ENCODE measurements at regions of chr2 and their contacts with region 1.

Region 1: GRCh38 chr2:165874445-165875039 is 79.0 kb downstream of the TTC21B start:
- DNase-seq: peak; percentile 79
- ATAC-seq: peak; percentile 91
- H3K4me3 ChIP-seq: no peak overlapping the region
- H3K4me3 Mint-ChIP-seq: peak overlapping the region; percentile 7
- H3K27ac ChIP-seq: peak overlapping the region in 1 of 2 donors; percentile 28
- H3K27ac Mint-ChIP-seq: peak overlapping the region; percentile 34
- H3K4me1 ChIP-seq: peaks cover 0 to 4% of the 10 kb centered on the region in 2 donors
- H3K4me1 Mint-ChIP-seq: peaks cover 3% of the 10 kb centered on the region
- H3K27me3 ChIP-seq: no peaks in the 10 kb centered on the region
- H3K27me3 Mint-ChIP-seq: no peaks in the 10 kb centered on the region
- CTCF ChIP-seq: peak; percentile 90

Region 2: GRCh38 chr2:165239230-165239629 is 635.3 kb before region 1 on chr2 and contains the start of gene SCN2A:
- CTCF ChIA-PET with region 1: interaction called, 12 read pairs
- POLR2A ChIA-PET with region 1: no interaction called
- intact Hi-C with region 1: no loop called
- DNase-seq: peak; percentile 31
- ATAC-seq: no peak
- H3K4me3 ChIP-seq: no peak within 1 kb of the TSS
- H3K4me3 Mint-ChIP-seq: no peak within 1 kb of the TSS
- H3K27ac ChIP-seq: no peak within 1 kb of the TSS
- H3K27ac Mint-ChIP-seq: no peak within 1 kb of the TSS
- H3K4me1 ChIP-seq: no peaks in the 10 kb centered on the region
- H3K4me1 Mint-ChIP-seq: no peaks in the 10 kb centered on the region
- H3K27me3 ChIP-seq: no peaks in the 10 kb centered on the region
- H3K27me3 Mint-ChIP-seq: peaks cover 14% of the 10 kb centered on the region
- CTCF ChIP-seq: peak; percentile 70
- total RNA-seq, gene SCN2A: 0.22 and 0.44 TPM in 2 replicates

Region 3: GRCh38 chr2:165401285-165401852 is 473.2 kb before region 1 on chr2:
- CTCF ChIA-PET with region 1: interaction called, 133 read pairs
- POLR2A ChIA-PET with region 1: no interaction called
- intact Hi-C with region 1: loop called (anchors 1 kb)
- DNase-seq: peak; percentile 75
- ATAC-seq: no peak
- H3K4me3 ChIP-seq: no peak overlapping the region
- H3K4me3 Mint-ChIP-seq: no peak overlapping the region
- H3K27ac ChIP-seq: no peak overlapping the region
- H3K27ac Mint-ChIP-seq: no peak overlapping the region
- H3K4me1 ChIP-seq: no peaks in the 10 kb centered on the region
- H3K4me1 Mint-ChIP-seq: no peaks in the 10 kb centered on the region
- H3K27me3 ChIP-seq: no peaks in the 10 kb centered on the region
- H3K27me3 Mint-ChIP-seq: peaks cover 3% of the 10 kb centered on the region
- CTCF ChIP-seq: peak; percentile 83

Region 4: GRCh38 chr2:165698444-165698894 is 176.1 kb before region 1 on chr2:
- CTCF ChIA-PET with region 1: interaction called, 9 read pairs
- POLR2A ChIA-PET with region 1: no interaction called
- intact Hi-C with region 1: loop called (anchors 2 kb)
- DNase-seq: peak; percentile 57
- ATAC-seq: peak; percentile 57
- H3K4me3 ChIP-seq: no peak overlapping the region
- H3K4me3 Mint-ChIP-seq: no peak overlapping the region
- H3K27ac ChIP-seq: no peak overlapping the region
- H3K27ac Mint-ChIP-seq: no peak overlapping the region
- H3K4me1 ChIP-seq: no peaks in the 10 kb centered on the region
- H3K4me1 Mint-ChIP-seq: peaks cover 5% of the 10 kb centered on the region
- H3K27me3 ChIP-seq: no peaks in the 10 kb centered on the region
- H3K27me3 Mint-ChIP-seq: no peaks in the 10 kb centered on the region
- CTCF ChIP-seq: peak; percentile 54

Region 5: DNA sequence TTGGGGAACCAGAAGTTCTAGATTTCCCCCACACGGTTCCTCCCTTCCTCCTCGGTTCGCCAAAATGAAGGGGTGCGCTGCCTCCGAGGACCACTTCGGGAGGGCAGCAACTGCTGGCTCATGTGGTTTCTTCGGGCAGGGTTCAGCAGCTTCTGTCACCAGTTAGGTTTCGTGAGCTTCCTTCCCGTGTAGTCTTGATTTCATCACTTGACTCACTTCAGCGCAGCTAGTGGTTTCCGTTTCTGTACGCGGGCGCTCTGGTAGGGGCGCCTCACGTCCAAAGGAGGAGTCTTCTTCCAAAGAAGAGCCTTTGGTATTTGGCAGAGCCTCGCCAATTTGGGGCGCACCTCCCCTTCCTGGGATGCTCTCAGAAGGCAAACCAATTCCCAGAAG is 80.0 kb before region 1 on chr2:
- CTCF ChIA-PET with region 1: interaction called, 18 read pairs
- POLR2A ChIA-PET with region 1: no interaction called
- intact Hi-C with region 1: loop called (anchors 2 kb)
- DNase-seq: peak; percentile 89
- ATAC-seq: peak; percentile 86
- H3K4me3 ChIP-seq: peak overlapping the region; percentile 71 to 91 (median 84)
- H3K4me3 Mint-ChIP-seq: peak overlapping the region; percentile 95
- H3K27ac ChIP-seq: peak overlapping the region; percentile 90 to 91
- H3K27ac Mint-ChIP-seq: peak overlapping the region; percentile 97
- H3K4me1 ChIP-seq: peaks cover 16 to 22% of the 10 kb centered on the region in 2 donors
- H3K4me1 Mint-ChIP-seq: peaks cover 42% of the 10 kb centered on the region
- H3K27me3 ChIP-seq: no peaks in the 10 kb centered on the region
- H3K27me3 Mint-ChIP-seq: no peaks in the 10 kb centered on the region
- CTCF ChIP-seq: no peak

Region 6: GRCh38 chr2:165889158-165889557 is 14.6 kb after region 1 on chr2:
- CTCF ChIA-PET with region 1: interaction called, 11 read pairs
- POLR2A ChIA-PET with region 1: no interaction called
- intact Hi-C with region 1: no loop called
- DNase-seq: no peak
- ATAC-seq: no peak
- H3K4me3 ChIP-seq: no peak overlapping the region
- H3K4me3 Mint-ChIP-seq: no peak overlapping the region
- H3K27ac ChIP-seq: no peak overlapping the region
- H3K27ac Mint-ChIP-seq: no peak overlapping the region
- H3K4me1 ChIP-seq: peaks cover 0 to 3% of the 10 kb centered on the region in 2 donors
- H3K4me1 Mint-ChIP-seq: peaks cover 8% of the 10 kb centered on the region
- H3K27me3 ChIP-seq: no peaks in the 10 kb centered on the region
- H3K27me3 Mint-ChIP-seq: no peaks in the 10 kb centered on the region
- CTCF ChIP-seq: no peak